ENCODE measurements at regions of chr3 and their contacts with region 1.

Region 1: DNA sequence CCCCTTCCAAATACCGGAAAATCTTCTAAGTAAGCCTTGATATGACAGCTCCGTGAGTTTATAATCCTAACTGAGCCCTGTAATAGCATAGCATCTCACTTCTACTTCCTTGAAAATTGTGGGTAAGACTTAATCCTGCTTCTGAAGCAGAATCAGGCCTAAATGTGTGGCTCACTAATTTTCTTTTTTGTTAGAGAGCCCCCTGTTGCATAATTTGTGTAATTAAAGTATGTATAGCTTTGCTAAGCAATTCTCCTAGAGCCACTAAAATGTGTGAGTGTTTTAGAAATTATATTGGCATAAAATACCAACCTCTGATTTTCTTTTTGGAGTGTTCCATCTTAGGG is 304.4 kb downstream of the FGF12 start:
- DNase-seq: no peak
- H3K4me3 ChIP-seq: no peak overlapping the region
- H3K27ac ChIP-seq: no peak overlapping the region
- H3K4me1 ChIP-seq: peaks cover 0 to 13% (median 9%) of the 10 kb centered on the region in 4 donors
- H3K27me3 ChIP-seq: no peaks in the 10 kb centered on the region
- CTCF ChIP-seq: peak; percentile 32 to 56 (median 35)
- EP300 ChIP-seq: no peak
- POLR2A ChIP-seq: no peak

Region 2: GRCh38 chr3:192130534-192131132 is 292.3 kb before region 1 on chr3:
- intact Hi-C with region 1: loop called (anchors 5 kb)
- DNase-seq: no peak
- H3K4me3 ChIP-seq: no peak overlapping the region
- H3K27ac ChIP-seq: no peak overlapping the region
- H3K4me1 ChIP-seq: peaks cover 0 to 11% (median 6%) of the 10 kb centered on the region in 4 donors
- H3K27me3 ChIP-seq: no peaks in the 10 kb centered on the region
- CTCF ChIP-seq: peak; percentile 64 to 78 (median 67)
- EP300 ChIP-seq: no peak
- POLR2A ChIP-seq: no peak

Region 3: GRCh38 chr3:192188218-192188835 is 234.6 kb before region 1 on chr3:
- intact Hi-C with region 1: loop called (anchors 5 kb)
- DNase-seq: no peak
- H3K4me3 ChIP-seq: no peak overlapping the region
- H3K27ac ChIP-seq: no peak overlapping the region
- H3K4me1 ChIP-seq: peaks cover 0 to 3% (median 0%) of the 10 kb centered on the region in 4 donors
- H3K27me3 ChIP-seq: no peaks in the 10 kb centered on the region
- CTCF ChIP-seq: peak; percentile 56 to 68 (median 58)
- EP300 ChIP-seq: no peak
- POLR2A ChIP-seq: no peak